Heart left ventricle (tissue), 16 donors: ENCODE measurements at regions of chr2 and their contacts with region 1.

Region 1: GRCh38 chr2:86704459-86704971 is 15.6 kb upstream of the RMND5A start:
- DNase-seq: peak in 4 of 5 donors; percentile 63 to 86 (median 78)
- ATAC-seq: peak; percentile 91 to 94 (median 92)
- H3K4me3 ChIP-seq: peak overlapping the region in 5 of 12 donors; percentile 10 to 33 (median 23)
- H3K27ac ChIP-seq: peak overlapping the region; percentile 69 to 97 (median 87)
- H3K4me1 ChIP-seq: peaks cover 0 to 29% (median 2%) of the 10 kb centered on the region in 12 donors
- H3K27me3 ChIP-seq: no peaks in the 10 kb centered on the region
- CTCF ChIP-seq: no peak
- POLR2A ChIP-seq: no peak

Region 2: DNA sequence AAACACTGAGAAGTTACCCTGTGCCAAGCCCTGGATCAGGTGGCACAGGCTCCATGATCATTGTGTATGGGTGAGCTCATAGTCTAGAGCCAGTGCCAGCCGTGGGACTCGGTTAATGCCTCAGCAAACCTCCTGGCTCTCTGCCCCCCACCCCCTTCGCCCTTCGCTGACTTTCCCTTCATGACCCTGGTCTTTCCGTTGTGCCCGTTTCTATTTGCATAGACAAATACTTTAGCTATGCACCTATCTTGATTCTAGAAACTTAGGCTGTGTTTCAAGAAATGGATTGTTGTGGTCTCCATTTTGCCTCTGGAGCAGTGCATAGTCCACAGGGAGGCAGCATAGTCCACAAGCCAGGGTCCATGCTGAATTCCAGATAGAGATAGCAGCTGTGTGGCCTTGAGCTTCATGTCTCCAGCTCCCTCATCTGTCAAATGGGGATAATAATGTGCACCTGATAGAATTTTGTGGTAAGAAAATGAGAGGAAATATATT is 308.2 kb before region 1 on chr2:
- intact Hi-C with region 1: loop called in 1 of 10 experiments (anchors 10 kb)
- DNase-seq: peak in 4 of 5 donors; percentile 27 to 66 (median 36)
- ATAC-seq: peak in 3 of 4 donors; percentile 49 to 59 (median 56)
- H3K4me3 ChIP-seq: no peak overlapping the region
- H3K27ac ChIP-seq: peak overlapping the region in 3 of 12 donors; percentile 4 to 84 (median 83)
- H3K4me1 ChIP-seq: peaks cover 0 to 32% (median 8%) of the 10 kb centered on the region in 12 donors
- H3K27me3 ChIP-seq: no peaks in the 10 kb centered on the region
- CTCF ChIP-seq: peak in 10 of 12 donors; percentile 17 to 54 (median 42)
- POLR2A ChIP-seq: no peak

Region 3: DNA sequence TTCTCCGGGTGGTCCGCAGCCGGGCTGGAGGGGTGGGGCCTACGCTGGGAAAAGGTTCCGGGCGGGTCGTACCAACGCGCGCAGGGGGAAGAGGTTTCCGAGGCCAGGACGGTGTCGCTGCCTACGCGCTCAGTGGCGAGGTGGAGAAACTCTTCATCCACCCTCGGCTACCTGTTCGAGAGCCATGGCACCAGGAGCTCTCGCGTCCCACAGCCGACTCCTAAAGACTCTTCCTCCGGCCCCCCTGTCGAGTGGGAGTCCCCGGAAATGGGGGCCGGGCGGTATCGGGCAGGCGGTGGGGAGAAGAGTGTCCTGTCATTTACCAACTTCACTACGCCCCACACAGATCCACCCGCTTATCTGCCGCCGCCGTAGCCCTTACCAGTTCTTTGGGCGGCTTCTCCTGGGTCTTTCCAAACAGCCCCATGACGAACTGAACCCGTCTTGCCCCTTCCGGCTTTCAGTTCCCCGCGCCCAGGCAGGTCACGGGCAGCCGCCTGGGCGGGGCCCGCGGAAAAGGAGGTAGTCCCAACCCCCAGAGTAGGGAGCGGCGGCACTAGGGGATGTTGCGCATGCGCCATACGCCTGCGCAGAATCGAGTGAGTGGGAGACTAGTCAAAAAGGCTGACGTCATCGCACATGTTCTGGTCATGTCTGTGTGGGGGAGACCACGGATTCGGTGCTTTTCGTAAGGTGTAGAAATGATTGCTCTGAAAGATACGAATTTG is 141.4 kb before region 1 on chr2 and contains the start of gene CHMP3:
- intact Hi-C with region 1: no loop called
- DNase-seq: peak; percentile 96 to 99 (median 98)
- ATAC-seq: peak; percentile 97 to 99 (median 98)
- H3K4me3 ChIP-seq: peak within 1 kb of the TSS; percentile 67 to 97 (median 80)
- H3K27ac ChIP-seq: peak within 1 kb of the TSS; percentile 98 to 100 (median 99)
- H3K4me1 ChIP-seq: peaks cover 0 to 50% (median 29%) of the 10 kb centered on the region in 12 donors
- H3K27me3 ChIP-seq: no peaks in the 10 kb centered on the region
- CTCF ChIP-seq: no peak
- POLR2A ChIP-seq: peak in 1 of 2 donors; percentile 58
- total RNA-seq, gene CHMP3: 75.4 to 178 (median 145) TPM